ENCODE measurements at regions of chr10 and their contacts with region 1.

Region 1: GRCh38 chr10:72273410-72274212 is at the start of gene DDIT4:
- DNase-seq: peak; percentile 99 to 100
- H3K4me3 ChIP-seq: peak within 1 kb of the TSS; percentile 88
- H3K27ac ChIP-seq: peak within 1 kb of the TSS; percentile 99
- H3K4me1 ChIP-seq: peaks cover 46% of the 10 kb centered on the region
- H3K27me3 ChIP-seq: no peaks in the 10 kb centered on the region
- CTCF ChIP-seq: no peak
- total RNA-seq, gene DDIT4: 178 and 212 TPM in 2 replicates

Region 2: DNA sequence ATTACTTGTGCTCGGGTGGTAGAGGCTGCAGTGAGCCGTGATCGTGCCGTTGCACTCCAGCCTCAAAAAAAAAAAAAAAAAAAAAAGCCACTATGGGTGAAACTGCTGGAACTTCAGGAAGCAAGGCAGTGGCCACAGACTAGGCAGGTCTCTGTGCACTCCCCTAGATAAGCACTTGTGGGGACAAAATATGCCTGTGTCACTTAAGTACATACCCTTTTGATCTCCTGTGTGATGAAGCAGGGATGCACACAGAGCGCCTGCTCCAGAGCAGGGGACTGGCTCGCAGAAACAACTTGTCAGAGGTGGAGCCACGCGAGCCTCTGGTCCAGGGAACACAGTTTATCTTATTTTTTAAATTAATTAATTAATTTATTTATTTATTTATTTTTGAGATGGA is 379.7 kb before region 1 on chr10:
- CTCF ChIA-PET with region 1: interaction called, 5 read pairs
- POLR2A ChIA-PET with region 1: no interaction called
- intact Hi-C with region 1: loop called (anchors 1 kb)
- DNase-seq: no peak
- H3K4me3 ChIP-seq: no peak overlapping the region
- H3K27ac ChIP-seq: no peak overlapping the region
- H3K4me1 ChIP-seq: peaks cover 16% of the 10 kb centered on the region
- H3K27me3 ChIP-seq: no peaks in the 10 kb centered on the region
- CTCF ChIP-seq: no peak

Region 3: GRCh38 chr10:72097448-72098300 is 175.9 kb before region 1 on chr10:
- CTCF ChIA-PET with region 1: no interaction called
- POLR2A ChIA-PET with region 1: no interaction called
- intact Hi-C with region 1: loop called (anchors 5 kb)
- DNase-seq: peak; percentile 84 to 100
- H3K4me3 ChIP-seq: no peak overlapping the region
- H3K27ac ChIP-seq: peak overlapping the region; percentile 68
- H3K4me1 ChIP-seq: peaks cover 49% of the 10 kb centered on the region
- H3K27me3 ChIP-seq: no peaks in the 10 kb centered on the region
- CTCF ChIP-seq: no peak

Region 4: DNA sequence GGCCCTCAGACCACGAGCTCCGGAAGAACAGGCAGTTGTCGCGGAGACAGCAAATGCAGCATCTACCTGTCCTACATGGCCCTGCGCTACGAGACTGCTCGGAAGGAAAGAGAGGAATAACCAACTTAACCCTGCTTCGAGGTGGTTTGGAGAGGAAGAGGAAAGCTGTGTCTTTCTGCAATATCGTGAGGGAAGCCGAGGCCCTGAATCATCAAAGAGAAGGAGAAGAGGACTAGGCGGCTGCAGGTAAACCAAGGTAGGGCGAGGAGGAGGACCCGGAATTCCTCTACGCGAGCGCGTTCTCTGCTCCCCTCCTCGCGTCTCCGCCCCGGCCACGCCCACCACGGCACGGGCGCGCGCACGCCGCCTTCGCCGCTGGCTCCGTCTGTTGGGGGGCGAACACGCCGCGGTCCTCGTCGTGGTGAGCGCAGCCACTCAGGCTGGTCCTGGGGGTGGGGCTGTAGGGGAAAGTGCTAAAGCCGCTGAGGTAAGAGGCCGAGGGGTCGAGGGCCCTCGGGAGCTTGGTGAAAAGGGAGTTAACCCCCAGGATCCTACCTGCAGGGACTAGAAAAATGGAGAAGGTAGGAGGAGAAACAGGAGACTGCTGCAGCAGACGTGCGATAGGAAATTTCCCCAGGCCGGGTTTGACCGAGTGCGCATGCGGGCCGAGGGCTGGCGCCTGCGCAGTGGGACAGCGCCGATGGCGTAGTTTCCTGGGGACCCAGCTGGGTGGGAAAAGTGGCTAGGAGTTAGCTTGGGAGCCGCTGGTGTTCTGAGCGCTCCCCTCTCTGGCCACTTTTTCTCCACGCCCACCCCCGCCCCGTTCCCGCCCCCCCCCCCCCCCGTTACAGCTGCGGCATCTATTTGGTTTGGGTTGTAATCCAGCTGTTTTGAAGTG is 57.7 kb before region 1 on chr10 and contains the starts of genes ANAPC16 and ASCC1:
- CTCF ChIA-PET with region 1: interaction called, 17 read pairs
- POLR2A ChIA-PET with region 1: interaction called, 5 read pairs
- intact Hi-C with region 1: loop called (anchors 2 kb)
- DNase-seq: peak; percentile 88 to 98
- H3K4me3 ChIP-seq: peak within 1 kb of the TSS; percentile 80
- H3K27ac ChIP-seq: peak within 1 kb of the TSS; percentile 90
- H3K4me1 ChIP-seq: peaks cover 45% of the 10 kb centered on the region
- H3K27me3 ChIP-seq: no peaks in the 10 kb centered on the region
- CTCF ChIP-seq: no peak
- total RNA-seq, gene ANAPC16: 142 and 171 TPM in 2 replicates
- total RNA-seq, gene ASCC1: 108 and 129 TPM in 2 replicates

Region 5: DNA sequence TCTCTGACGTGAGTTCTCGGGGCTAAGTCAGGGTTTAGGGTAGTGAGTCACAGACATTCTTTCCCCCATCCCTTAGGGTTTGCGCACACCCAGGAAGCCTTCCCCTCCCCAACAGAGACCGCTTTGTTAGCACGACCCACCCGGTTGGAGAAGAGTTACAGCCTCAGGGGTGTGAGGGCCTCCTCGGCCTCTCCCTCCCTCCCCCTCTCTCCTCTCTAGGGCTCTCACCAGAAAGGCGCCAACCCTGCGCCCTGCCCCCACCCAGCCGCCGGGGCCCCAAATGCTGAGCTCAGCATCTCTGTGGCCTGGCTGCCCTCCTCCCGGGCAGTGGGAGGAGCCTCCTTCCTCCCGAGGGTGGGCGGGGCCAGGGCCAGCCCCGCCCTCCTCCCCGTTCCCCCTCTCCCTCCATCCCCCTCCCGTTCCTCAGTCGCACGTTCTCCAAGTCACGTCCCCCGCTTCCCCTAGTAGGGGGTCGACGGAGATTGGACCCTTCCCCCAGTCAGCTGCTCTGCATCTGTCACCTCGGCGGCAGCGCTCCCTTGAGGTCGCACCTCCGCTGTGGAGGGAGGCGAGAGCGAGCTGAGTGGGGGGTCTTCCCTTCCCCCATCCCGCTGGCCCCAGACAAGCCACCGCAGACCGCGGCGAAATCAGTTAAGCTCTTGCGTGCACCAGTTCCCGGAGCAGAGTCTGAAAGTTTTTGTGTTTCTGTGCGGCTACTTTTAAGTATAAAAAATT is 12.9 kb before region 1 on chr10:
- CTCF ChIA-PET with region 1: interaction called, 6 read pairs
- POLR2A ChIA-PET with region 1: interaction called, 6 read pairs
- intact Hi-C with region 1: loop called (anchors 1 kb)
- DNase-seq: peak; percentile 97 to 98
- H3K4me3 ChIP-seq: peak overlapping the region; percentile 63
- H3K27ac ChIP-seq: peak overlapping the region; percentile 97
- H3K4me1 ChIP-seq: peaks cover 76% of the 10 kb centered on the region
- H3K27me3 ChIP-seq: no peaks in the 10 kb centered on the region
- CTCF ChIP-seq: no peak

Region 6: DNA sequence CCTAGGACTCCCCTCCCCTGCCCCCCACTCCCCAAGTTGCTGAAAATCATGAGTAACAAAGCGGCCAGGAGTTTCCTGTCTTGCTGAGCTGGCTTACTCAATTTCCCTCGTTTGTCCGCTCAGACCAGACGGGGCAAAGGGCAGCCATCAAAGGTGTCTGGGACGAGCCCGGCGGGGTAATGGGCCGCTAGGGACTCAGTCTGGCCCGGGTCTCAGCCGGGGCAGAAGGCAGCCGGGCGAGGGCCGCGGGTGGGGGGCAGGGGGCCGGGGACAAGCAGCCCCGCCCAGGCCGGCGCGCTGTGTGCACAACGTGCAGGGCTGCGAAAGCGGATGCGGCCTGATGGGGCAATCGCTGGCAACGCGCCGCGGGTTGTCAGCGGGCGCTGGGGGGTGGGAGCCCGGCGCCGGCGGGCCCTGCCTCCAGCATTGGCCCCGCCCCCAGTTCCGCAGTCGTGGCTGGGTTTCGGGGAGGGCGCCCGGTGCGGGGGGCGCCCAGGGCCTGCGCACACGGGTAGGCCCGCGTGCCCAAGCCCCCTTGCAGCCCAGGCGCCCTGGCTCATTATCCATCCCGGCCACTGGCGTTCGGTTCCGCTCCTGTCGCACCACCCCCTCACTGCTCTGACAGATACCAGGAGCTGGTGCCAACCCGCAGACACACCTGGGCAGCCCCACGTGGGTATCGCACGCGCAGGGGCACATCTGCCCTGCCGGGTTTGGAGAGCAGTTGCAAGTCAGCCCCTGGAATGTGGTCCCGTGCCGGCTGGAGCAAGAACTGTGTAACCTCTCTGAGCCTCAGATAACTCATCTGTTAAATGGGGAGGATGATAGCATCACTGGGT is 46.0 kb after region 1 on chr10:
- CTCF ChIA-PET with region 1: interaction called, 8 read pairs
- POLR2A ChIA-PET with region 1: interaction called, 32 read pairs
- intact Hi-C with region 1: loop called (anchors 2 kb)
- DNase-seq: peak; percentile 91 to 95
- H3K4me3 ChIP-seq: peak overlapping the region; percentile 59
- H3K27ac ChIP-seq: peak overlapping the region; percentile 99
- H3K4me1 ChIP-seq: peaks cover 95% of the 10 kb centered on the region
- H3K27me3 ChIP-seq: no peaks in the 10 kb centered on the region
- CTCF ChIP-seq: no peak

Measured in PC-9 (cell line).